Cardiac septum (tissue), 1 donor: ENCODE measurements at regions of chr1 and their contacts with region 1.

Region 1: GRCh38 chr1:2586154-2587070 is at the start of gene PRXL2B:
- DNase-seq: peak; percentile 100
- total RNA-seq, gene PRXL2B: 3.4 TPM

Region 2: DNA sequence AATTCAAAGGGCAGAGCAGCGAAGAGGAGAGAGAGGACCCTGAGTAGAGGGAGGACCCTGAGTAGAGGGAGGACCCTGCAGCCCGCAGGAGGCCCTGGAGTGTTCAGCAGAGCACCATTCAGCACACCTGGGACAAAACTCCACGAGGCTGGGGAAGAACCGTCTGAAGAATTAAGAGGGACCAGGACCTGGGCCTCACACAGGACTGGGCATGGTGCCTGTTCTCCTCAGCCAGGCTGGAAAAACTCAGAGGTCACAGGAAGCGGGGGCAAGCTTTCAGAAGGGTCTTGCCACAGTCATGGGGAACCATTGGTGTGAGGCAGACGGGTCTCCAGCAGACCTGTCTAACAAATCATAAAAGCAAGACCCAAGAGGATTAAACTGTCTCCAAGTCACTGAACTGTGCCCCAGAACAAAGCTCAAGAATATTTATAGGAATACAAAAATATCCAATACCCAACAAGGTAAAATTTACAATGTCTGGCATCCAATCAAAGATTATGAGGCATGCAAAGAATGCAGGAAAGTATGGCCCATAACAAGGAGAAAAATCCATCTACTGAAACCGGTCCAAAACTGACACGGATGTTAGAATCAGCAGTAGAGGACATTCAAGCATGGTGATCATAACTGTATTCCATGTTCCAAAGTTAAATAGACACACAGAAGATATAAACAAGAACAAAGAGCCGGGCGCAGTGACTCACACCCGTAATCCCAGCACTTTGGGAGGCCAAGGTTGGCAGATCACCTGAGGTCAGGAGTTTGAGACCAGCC is 225.6 kb before region 1 on chr1:
- intact Hi-C with region 1: no loop called
- DNase-seq: peak; percentile 17

Region 3: GRCh38 chr1:2412519-2413233 is 173.7 kb before region 1 on chr1 and contains the start of gene PEX10:
- intact Hi-C with region 1: loop called (anchors 5 kb)
- DNase-seq: peak; percentile 99
- total RNA-seq, gene PEX10: 18.1 TPM

Region 4: DNA sequence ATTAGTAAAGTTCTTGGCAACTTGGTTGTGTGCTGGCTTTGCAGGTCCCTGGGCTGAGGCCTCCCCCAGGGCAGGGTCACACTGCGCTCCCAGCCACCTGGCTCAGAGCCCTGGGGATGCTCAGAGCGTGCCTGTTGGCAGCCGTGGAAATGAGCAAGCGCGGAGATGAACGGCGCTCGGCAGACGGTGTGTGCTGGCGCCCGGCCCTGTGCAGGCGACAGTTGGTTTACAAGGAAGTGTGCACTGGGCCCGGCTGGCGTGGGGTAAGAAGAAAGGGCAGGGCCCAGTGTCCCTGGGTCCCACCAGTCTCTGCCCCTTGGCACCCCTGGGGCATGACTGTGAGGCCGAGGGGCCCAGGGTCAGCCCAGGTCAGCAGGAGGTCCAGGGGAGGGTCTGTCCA is 148.4 kb before region 1 on chr1:
- intact Hi-C with region 1: no loop called
- DNase-seq: no peak

Region 5: GRCh38 chr1:2480986-2481364 is 105.4 kb before region 1 on chr1:
- intact Hi-C with region 1: no loop called
- DNase-seq: no peak

Region 6: GRCh38 chr1:2525920-2526823 is 60.2 kb before region 1 on chr1 and contains the start of gene PANK4:
- intact Hi-C with region 1: loop called (anchors 5 kb)
- DNase-seq: peak; percentile 95
- total RNA-seq, gene PANK4: 37.1 TPM

Region 7: GRCh38 chr1:2545759-2546514 is 40.5 kb before region 1 on chr1:
- intact Hi-C with region 1: loop called (anchors 2 kb)
- DNase-seq: peak; percentile 96

Region 8: GRCh38 chr1:2642560-2643413 is 56.4 kb after region 1 on chr1:
- intact Hi-C with region 1: loop called (anchors 5 kb)
- DNase-seq: peak; percentile 93

Region 9: GRCh38 chr1:3624200-3625136 is 1038.1 kb after region 1 on chr1 and contains the start of gene TPRG1L:
- intact Hi-C with region 1: loop called (anchors 10 kb)
- DNase-seq: peak; percentile 99
- total RNA-seq, gene TPRG1L: 44.3 TPM